AG04449 (cell line): ENCODE measurements at regions of chr2 and their contacts with region 1.

Region 1: GRCh38 chr2:161250864-161251436 is 57.3 kb upstream of the PSMD14 start:
- DNase-seq: no peak
- H3K4me3 ChIP-seq: no peak overlapping the region
- CTCF ChIP-seq: peak; percentile 52

Region 2: DNA sequence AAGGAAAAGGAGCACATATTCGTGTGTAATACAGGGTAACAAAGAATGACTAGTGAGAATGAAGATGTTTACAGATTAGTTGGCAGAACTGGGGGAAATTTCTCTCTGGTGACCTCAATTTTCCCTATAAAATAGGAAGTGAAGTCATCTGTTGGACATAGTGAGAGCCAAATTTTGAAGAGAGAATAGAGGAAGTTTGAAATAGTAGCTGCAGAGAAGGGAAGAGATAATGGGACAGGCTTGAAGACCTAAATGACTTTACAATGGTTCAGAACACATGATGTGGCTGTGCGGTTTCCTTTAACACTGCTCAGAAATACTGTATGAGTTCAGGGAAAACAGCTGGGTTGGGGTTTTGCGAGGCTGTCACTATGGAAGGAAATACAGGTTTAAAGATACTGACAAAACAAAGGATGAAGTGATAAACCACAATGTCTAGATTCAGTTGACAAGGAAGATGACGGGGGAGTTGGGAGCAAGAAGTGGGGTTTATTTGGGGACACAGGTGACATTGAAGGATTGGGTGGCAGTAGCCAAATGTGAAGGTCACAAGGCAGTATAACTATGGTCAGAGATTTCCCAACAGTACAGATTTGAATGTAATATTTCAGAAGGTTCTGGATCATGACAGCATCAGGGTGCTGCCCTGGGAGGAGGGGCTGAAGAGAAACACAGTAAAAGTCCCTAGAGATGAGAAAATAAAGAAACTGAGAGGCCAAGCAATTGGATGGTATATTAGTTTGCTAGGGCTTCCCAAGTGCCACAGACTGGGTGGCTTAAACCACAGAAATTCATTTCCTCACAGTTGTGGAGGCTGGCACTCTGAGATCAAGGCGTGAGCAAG is 173.4 kb before region 1 on chr2:
- CTCF ChIA-PET with region 1: no interaction called
- POLR2A ChIA-PET with region 1: no interaction called
- DNase-seq: no peak
- H3K4me3 ChIP-seq: no peak overlapping the region
- CTCF ChIP-seq: no peak

Region 3: DNA sequence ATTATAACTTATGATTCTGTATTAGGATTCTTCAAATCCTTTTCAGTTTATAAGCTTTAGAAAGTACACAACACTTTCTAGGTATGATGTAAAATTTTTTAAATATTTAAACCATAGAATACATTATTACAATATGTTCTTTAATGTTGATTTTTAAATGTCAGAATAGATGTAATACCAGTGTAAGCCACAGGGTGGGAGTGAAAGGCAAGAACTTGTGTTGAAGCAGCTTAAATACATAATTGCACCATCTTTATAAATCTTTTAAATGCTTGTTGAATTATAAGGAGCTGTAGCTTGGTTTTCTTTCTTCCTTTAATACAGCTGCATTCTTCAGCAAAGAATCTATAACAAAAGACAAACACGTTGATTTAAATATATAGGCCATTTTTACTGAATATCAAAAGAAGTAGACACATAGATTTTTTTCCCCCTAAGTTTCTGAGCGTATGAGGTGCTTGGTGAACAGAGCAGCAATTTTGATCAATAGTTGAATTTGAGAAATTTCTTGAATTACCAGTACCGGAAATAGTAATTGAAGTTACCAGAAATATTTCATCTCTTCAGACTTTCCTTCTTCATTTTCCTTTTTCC is 27.7 kb before region 1 on chr2:
- CTCF ChIA-PET with region 1: interaction called, 10 read pairs
- POLR2A ChIA-PET with region 1: no interaction called
- DNase-seq: no peak
- H3K4me3 ChIP-seq: no peak overlapping the region
- CTCF ChIP-seq: peak; percentile 33

Region 4: GRCh38 chr2:161238560-161239325 is 12.2 kb before region 1 on chr2:
- CTCF ChIA-PET with region 1: interaction called, 19 read pairs
- POLR2A ChIA-PET with region 1: no interaction called
- DNase-seq: no peak
- H3K4me3 ChIP-seq: peak overlapping the region; percentile 64
- CTCF ChIP-seq: no peak

Region 5: DNA sequence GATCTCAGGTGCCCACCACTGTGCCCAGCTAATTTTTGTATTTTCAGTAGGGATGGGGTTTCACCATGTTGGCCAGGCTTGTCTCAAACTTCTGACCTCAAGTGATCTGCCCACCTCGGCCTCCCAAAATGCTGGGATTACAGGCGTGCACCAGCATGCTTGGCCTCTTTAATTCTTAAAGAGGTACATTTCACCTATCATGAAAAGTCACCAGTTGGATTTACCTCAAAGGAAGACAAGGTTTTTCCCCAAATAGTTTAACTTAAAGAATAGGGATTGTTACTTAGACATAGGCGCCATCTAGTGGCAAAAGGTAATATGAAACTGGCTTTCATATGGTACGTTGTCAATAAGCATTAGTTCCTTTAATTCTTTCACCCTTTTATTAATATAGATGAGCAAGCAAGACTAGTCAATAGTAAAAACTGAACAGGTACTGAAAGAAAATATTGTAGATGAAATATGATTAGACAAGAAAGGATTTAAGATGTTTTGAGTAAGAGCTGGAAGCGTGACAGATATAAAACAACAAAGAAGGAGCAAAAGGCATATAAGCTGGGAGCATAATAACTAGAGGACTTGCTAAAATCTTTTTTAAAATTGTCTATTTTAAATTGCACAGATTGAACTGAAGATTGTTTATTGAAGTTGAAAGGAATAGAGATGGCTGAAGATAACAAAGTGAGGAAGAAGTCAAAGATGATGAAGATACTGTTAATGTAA is 22.2 kb after region 1 on chr2:
- CTCF ChIA-PET with region 1: interaction called, 42 read pairs
- POLR2A ChIA-PET with region 1: no interaction called
- DNase-seq: no peak
- H3K4me3 ChIP-seq: no peak overlapping the region
- CTCF ChIP-seq: peak; percentile 41

Region 6: GRCh38 chr2:161436411-161436810 is 185.5 kb after region 1 on chr2:
- CTCF ChIA-PET with region 1: no interaction called
- POLR2A ChIA-PET with region 1: no interaction called
- DNase-seq: peak; percentile 71
- H3K4me3 ChIP-seq: no peak overlapping the region
- CTCF ChIP-seq: no peak

Region 7: GRCh38 chr2:161946489-161947107 is 695.6 kb after region 1 on chr2:
- CTCF ChIA-PET with region 1: interaction called, 14 read pairs
- POLR2A ChIA-PET with region 1: no interaction called
- DNase-seq: no peak
- H3K4me3 ChIP-seq: no peak overlapping the region
- CTCF ChIP-seq: peak; percentile 24